A549 (cell line): ENCODE measurements at regions of chr9 and their contacts with region 1.

Region 1: DNA sequence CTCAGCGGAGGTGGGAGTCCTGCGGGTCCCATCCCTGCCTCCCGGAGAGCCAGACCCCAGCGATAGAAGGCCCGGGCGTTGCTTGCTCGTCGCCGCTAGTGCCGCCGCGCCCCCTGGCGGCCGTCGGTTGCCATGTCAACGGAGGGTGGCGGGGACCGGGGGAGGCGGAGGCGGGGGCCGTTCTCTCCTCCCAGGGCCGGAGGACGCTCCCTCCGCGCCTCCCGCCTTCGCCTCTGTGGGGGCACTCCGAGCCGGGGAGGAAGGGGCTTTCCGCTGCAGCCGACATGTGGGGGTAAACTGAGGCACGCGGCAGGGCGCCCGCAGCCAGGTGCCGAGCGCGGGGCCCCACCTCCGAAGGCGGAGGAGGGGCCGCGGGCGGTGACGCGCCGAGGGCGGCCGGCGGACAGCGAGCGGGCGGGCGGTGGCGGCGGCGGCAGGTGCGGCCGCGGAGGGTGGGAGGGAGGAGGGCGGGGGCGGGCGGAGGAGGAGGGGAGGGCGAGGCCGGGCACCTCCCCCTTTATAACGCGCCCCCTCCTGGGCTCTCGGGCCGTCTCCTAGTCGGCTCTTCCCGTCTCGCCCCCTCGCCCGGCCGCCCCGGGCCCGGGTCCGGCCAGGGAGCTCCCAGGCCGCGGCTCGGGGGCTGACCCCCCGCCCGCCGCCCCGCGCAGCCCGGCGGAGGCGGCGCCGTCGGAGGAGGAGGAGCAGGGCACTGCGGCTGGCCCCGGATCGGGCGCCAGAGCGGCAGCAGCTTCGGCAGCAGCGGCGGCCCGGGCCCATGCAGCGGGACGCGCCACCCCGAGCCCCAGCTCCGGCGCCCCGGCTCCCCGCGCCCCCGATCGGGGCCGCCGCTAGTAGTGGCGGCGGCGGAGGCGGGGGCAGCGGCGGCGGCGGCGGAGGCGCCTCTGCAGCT is 556 bp upstream of the CDK9 start:
- DNase-seq: peak; percentile 85 to 92
- ATAC-seq: peak; percentile 72 to 77
- H3K4me3 ChIP-seq: peak overlapping the region; percentile 88
- H3K27ac ChIP-seq: peak overlapping the region; percentile 94 to 99
- H3K4me1 ChIP-seq: peaks cover 11% of the 10 kb centered on the region; the same call in 2 of the 3 replicates
- CTCF ChIP-seq: peak; percentile 90
- EP300 ChIP-seq: no peak
- POLR2A ChIP-seq: peak; percentile 28
- RAD21 ChIP-seq: peak; percentile 76 to 96

Region 2: GRCh38 chr9:127525401-127526187 is 259.7 kb before region 1 on chr9:
- CTCF ChIA-PET with region 1: no interaction called
- POLR2A ChIA-PET with region 1: no interaction called
- DNase-seq: peak in 1 of 2 experiments; percentile 71
- ATAC-seq: 0 out of 6 replicates have a peak, but pooled peaks of 1 of the 2 experiments have one; percentile 12
- H3K4me3 ChIP-seq: no peak overlapping the region
- H3K27ac ChIP-seq: peak overlapping the region in 1 of 2 experiments; percentile 77; a peak in 2 of 6 replicates
- H3K4me1 ChIP-seq: peaks cover 31% of the 10 kb centered on the region
- CTCF ChIP-seq: peak; percentile 37
- EP300 ChIP-seq: no peak
- POLR2A ChIP-seq: no peak
- RAD21 ChIP-seq: peak; percentile 36 to 60; a peak in 3 of 5 replicates

Region 3: DNA sequence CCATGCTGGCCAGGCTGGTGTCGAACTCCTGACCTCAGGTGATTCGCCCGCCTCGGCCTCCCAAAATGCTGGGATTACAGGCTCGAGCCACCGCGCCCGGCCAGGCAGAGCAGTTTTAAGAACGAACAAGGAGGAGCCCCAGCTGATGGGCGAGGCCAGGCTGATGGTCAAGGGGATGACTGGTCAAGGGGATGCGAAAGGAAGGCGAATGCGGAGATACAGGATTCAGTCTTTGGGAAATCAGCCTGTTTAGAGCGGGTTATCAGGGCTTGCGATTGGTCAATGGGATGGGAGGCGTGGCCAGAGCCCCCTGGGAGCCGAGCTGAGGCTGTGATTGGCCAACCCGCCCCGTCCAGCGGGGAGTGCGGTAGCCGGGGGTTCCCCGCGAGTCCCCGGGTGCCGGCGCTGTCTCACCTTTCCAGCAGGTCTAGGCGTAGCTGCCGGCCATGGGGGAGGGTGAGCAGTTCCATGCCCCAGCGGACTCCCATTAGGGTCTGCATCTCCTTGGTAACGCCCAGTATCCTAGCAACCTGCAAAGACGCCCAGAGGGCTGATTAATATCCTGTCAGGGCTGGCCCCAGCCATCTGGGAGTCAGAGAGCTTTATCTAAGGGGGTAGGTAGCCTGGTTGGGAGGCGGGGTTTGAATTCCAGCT is 42.7 kb before region 1 on chr9:
- CTCF ChIA-PET with region 1: interaction called, 114 read pairs
- POLR2A ChIA-PET with region 1: interaction called, 9 read pairs
- DNase-seq: peak; percentile 88 to 94
- ATAC-seq: peak; percentile 73 to 87
- H3K4me3 ChIP-seq: peak overlapping the region; percentile 42
- H3K27ac ChIP-seq: peak overlapping the region; percentile 6 to 71; a peak in 4 of 6 replicates
- H3K4me1 ChIP-seq: peaks cover 31% of the 10 kb centered on the region
- CTCF ChIP-seq: no peak
- EP300 ChIP-seq: no peak
- POLR2A ChIP-seq: no peak
- RAD21 ChIP-seq: no peak

Region 4: GRCh38 chr9:127770905-127771569 is 14.2 kb before region 1 on chr9:
- CTCF ChIA-PET with region 1: interaction called, 157 read pairs
- POLR2A ChIA-PET with region 1: interaction called, 3 read pairs
- DNase-seq: peak; percentile 86 to 98
- ATAC-seq: peak; percentile 92 to 98
- H3K4me3 ChIP-seq: peak overlapping the region; percentile 40
- H3K27ac ChIP-seq: peak overlapping the region in 1 of 2 experiments; percentile 54; a peak in 2 of 6 replicates
- H3K4me1 ChIP-seq: peaks cover 4% of the 10 kb centered on the region; the same call in 1 of the 3 replicates
- CTCF ChIP-seq: no peak
- EP300 ChIP-seq: no peak
- POLR2A ChIP-seq: no peak
- RAD21 ChIP-seq: no peak

Region 5: DNA sequence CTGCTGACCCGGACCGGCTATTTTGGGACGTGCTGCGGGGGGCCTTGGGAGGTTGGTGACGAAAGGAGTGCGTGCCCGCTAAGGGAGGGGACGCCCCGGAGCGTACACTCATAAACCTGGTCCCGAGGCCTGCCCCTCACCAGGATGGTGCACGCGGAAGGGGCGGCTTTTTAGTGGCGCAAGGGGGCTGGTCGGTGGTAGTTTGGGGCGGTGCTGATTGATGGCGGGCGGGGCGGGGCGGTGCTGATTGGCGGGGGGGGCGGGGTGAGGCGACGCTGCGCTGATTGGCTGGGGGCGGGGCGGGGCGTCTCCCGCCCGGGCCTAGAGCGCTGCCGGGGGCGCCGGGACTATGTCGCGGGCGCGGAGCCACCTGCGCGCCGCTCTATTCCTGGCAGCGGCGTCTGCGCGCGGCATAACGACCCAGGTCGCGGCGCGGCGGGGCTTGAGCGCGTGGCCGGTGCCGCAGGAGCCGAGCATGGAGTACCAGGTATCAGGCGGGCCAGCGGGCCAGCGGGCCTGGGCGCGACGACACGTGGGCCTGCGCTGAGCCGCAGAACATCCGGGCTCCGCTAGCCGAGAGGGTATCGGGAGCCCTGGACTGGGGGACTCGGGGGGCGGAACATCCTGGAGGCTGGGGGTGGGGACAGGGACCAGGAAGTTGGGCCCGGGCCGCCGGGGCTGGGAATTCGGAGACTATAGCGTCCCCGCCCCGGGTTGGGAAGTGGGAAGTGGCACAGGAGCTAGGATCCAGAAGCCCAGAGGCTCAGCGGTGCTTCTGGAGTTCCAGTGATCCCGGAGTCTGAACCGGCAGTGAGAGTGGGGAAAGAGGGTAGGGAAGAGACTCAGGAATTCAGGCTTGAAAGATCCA is 17.5 kb after region 1 on chr9 and contains the start of gene FPGS:
- CTCF ChIA-PET with region 1: interaction called, 63 read pairs
- POLR2A ChIA-PET with region 1: interaction called, 8 read pairs
- DNase-seq: peak; percentile 91 to 95
- ATAC-seq: peak; percentile 86 to 90
- H3K4me3 ChIP-seq: peak within 1 kb of the TSS; percentile 85
- H3K27ac ChIP-seq: peak within 1 kb of the TSS; percentile 93 to 96
- H3K4me1 ChIP-seq: peaks cover 38% of the 10 kb centered on the region
- CTCF ChIP-seq: 0 out of 3 replicates have a peak, but pooled peaks have one; percentile 3
- EP300 ChIP-seq: no peak
- POLR2A ChIP-seq: peak; percentile 62
- RAD21 ChIP-seq: 0 out of 5 replicates have a peak, but pooled peaks of 1 of the 2 experiments have one; percentile 12
- polyA plus RNA-seq, gene FPGS: 28.8 and 33.4 TPM in 2 replicates

Region 6: DNA sequence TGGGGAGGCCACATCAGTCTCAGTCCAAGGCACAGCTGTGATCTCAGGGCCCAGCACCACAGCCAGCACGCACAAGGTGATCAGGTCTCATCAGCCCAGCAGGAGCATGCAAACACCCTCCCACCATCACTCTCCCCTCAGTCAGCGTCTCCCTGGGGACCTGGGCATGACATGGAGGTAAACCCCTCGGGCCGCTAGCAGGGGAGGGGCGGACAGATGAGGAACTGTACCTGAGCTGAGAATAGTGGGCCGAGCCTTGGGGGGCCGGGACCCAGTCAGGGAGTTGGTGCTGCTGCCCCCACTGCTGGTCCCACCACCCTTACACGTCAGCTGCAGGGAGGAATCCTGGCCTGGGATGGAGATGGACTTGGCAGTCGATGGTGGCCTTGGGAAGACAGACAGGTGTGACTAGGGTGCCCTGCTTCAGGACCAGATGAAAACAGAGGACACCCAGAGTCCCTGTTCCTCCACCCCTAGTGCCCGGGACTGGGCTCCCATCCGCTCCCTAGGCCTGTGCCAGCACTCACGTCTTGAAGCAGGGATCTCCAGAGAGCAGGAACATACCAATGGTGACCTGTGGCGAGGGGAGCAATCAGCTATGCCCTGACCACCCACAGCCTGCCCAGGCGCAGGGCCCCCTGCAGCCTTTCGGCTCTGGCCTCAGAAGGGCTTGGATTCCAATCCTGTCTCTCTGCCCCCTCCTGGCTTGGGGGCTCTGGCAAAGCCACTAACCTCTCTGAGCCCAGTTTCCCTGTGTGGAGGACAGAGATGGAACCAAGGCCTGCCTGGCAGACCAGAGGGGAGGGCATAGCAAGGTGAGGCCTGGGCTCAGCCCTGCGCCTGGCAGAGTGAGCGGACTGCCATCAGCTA is 162.8 kb after region 1 on chr9:
- CTCF ChIA-PET with region 1: no interaction called
- POLR2A ChIA-PET with region 1: no interaction called
- DNase-seq: no peak
- ATAC-seq: no peak
- H3K4me3 ChIP-seq: no peak overlapping the region
- H3K27ac ChIP-seq: peak overlapping the region in 1 of 2 experiments; percentile 55; a peak in 3 of 6 replicates
- H3K4me1 ChIP-seq: peaks cover 25% of the 10 kb centered on the region
- CTCF ChIP-seq: no peak
- EP300 ChIP-seq: no peak
- POLR2A ChIP-seq: no peak
- RAD21 ChIP-seq: no peak